CD8-positive, alpha-beta T cell (primary cell): ENCODE measurements at regions of chr4 and their contacts with region 1.

Region 1: GRCh38 chr4:139177868-139178611 is 1.0 kb upstream of the ELF2 start:
- DNase-seq: peak; percentile 73 to 94 (median 88)
- ATAC-seq: peak; percentile 73
- H3K4me3 ChIP-seq: peak overlapping the region; percentile 73 to 99
- H3K4me3 Mint-ChIP-seq: peak overlapping the region; percentile 89
- H3K27ac ChIP-seq: peak overlapping the region; percentile 54 to 67
- H3K27ac Mint-ChIP-seq: peak overlapping the region; percentile 85
- H3K4me1 ChIP-seq: peaks cover 5% of the 10 kb centered on the region
- H3K4me1 Mint-ChIP-seq: peaks cover 19% of the 10 kb centered on the region
- H3K27me3 ChIP-seq: no peaks in the 10 kb centered on the region
- H3K27me3 Mint-ChIP-seq: no peaks in the 10 kb centered on the region
- CTCF ChIP-seq: no peak

Region 2: DNA sequence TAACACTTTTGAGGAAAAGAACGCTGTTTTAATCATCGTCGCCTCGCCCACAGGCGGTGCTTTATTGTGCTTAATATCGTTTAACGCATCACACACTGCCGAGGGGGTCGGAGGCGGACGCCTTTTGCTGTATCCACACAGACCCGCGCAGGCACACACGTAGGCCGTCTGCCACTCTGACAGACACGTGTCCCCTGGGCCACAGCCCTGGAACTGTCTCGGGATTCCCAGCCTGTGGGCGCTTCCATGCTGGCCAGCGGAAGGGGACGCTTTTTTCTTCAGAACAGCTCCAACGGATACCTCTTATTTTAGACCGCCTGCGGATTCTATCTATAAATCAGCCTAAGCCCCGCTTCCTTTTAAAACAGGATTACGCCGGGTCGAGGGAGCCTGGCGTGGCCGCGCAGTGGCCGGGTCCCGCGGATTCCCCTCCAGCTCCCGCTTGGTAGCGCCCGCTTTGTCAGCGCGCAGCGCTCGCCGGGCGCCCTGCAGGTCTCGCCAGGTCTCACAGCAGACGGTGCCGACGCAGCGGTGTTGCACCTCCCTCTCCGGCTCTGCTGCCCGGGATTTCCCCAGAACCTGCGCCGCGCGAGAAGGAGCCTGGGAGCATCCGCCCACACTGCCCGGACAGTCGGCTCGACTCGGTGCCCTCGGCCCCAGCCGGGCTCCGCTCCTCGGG is 162.6 kb before region 1 on chr4 and contains the start of gene NOCT:
- CTCF ChIA-PET with region 1: no interaction called
- POLR2A ChIA-PET with region 1: interaction called, 3 read pairs
- intact Hi-C with region 1: loop called (anchors 1 to 5 kb)
- DNase-seq: peak; percentile 76 to 98 (median 90)
- ATAC-seq: peak; percentile 86
- H3K4me3 ChIP-seq: peak within 1 kb of the TSS; percentile 52 to 67
- H3K4me3 Mint-ChIP-seq: peak within 1 kb of the TSS; percentile 91
- H3K27ac ChIP-seq: peak within 1 kb of the TSS; percentile 75 to 92
- H3K27ac Mint-ChIP-seq: peak within 1 kb of the TSS; percentile 99
- H3K4me1 ChIP-seq: peaks cover 7% of the 10 kb centered on the region
- H3K4me1 Mint-ChIP-seq: peaks cover 30% of the 10 kb centered on the region
- H3K27me3 ChIP-seq: no peaks in the 10 kb centered on the region
- H3K27me3 Mint-ChIP-seq: no peaks in the 10 kb centered on the region
- CTCF ChIP-seq: no peak
- total RNA-seq, gene NOCT: 45.7 to 49.6 TPM

Region 3: DNA sequence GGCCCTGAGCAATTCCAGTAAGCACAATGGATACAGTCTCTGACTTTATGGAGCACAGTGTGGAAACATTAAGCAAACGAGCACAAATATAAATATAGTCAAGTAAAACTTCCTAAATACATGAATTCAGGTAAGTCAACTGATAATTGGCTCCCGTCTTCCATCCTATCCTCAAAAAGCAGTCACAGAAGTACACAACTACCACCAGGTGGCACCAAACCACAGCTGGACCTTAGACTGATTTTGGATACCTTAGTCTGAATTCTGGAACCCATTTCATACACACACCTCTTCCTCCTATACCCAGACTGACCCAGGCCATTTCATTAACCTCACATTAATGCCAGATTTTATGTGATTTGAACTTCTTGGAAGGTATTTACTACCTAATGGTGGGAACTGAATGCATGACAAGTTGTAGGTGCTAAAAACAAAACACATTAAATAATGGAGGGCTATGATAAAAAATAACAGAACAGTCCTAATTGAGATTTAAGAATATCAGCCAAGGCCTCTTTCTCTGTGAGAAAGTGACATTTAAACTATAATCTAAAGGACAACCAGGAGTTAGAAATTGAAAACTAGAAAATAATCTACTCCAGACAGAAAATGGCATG is 78.6 kb before region 1 on chr4:
- CTCF ChIA-PET with region 1: no interaction called
- POLR2A ChIA-PET with region 1: no interaction called
- intact Hi-C with region 1: loop called in 1 of 2 experiments (anchors 5 kb)
- DNase-seq: peak; percentile 37 to 89 (median 75)
- ATAC-seq: peak; percentile 80
- H3K4me3 ChIP-seq: no peak overlapping the region
- H3K4me3 Mint-ChIP-seq: no peak overlapping the region
- H3K27ac ChIP-seq: no peak overlapping the region
- H3K27ac Mint-ChIP-seq: no peak overlapping the region
- H3K4me1 ChIP-seq: no peaks in the 10 kb centered on the region
- H3K4me1 Mint-ChIP-seq: peaks cover 2% of the 10 kb centered on the region
- H3K27me3 ChIP-seq: no peaks in the 10 kb centered on the region
- H3K27me3 Mint-ChIP-seq: no peaks in the 10 kb centered on the region
- CTCF ChIP-seq: peak; percentile 76

Region 4: DNA sequence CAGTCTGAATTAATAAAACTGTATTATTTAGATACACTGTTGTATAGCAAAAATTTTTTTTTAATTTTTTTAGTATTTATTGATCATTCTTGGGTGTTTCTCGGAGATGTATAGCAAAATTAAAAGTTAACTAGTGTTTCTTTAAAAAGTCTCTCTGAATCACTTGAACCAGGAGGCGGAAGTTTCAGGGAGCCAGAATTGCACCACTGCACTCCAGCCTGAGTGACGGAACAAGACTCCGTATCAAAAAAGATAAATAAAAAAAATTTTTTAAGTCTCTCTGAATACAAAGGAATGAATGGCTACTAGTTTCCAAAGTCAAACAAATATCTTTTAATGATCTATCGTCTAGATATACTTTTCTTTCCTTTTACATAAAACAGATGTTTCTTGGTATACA is 65.4 kb before region 1 on chr4:
- CTCF ChIA-PET with region 1: no interaction called
- POLR2A ChIA-PET with region 1: no interaction called
- intact Hi-C with region 1: no loop called
- DNase-seq: no peak
- ATAC-seq: no peak
- H3K4me3 ChIP-seq: no peak overlapping the region
- H3K4me3 Mint-ChIP-seq: no peak overlapping the region
- H3K27ac ChIP-seq: no peak overlapping the region
- H3K27ac Mint-ChIP-seq: no peak overlapping the region
- H3K4me1 ChIP-seq: no peaks in the 10 kb centered on the region
- H3K4me1 Mint-ChIP-seq: no peaks in the 10 kb centered on the region
- H3K27me3 ChIP-seq: no peaks in the 10 kb centered on the region
- H3K27me3 Mint-ChIP-seq: no peaks in the 10 kb centered on the region
- CTCF ChIP-seq: no peak

Region 5: GRCh38 chr4:139234253-139234652 is 56.2 kb after region 1 on chr4:
- CTCF ChIA-PET with region 1: no interaction called
- POLR2A ChIA-PET with region 1: no interaction called
- intact Hi-C with region 1: no loop called
- DNase-seq: no peak
- ATAC-seq: no peak
- H3K4me3 ChIP-seq: no peak overlapping the region
- H3K4me3 Mint-ChIP-seq: no peak overlapping the region
- H3K27ac ChIP-seq: no peak overlapping the region
- H3K27ac Mint-ChIP-seq: no peak overlapping the region
- H3K4me1 ChIP-seq: no peaks in the 10 kb centered on the region
- H3K4me1 Mint-ChIP-seq: peaks cover 4% of the 10 kb centered on the region
- H3K27me3 ChIP-seq: no peaks in the 10 kb centered on the region
- H3K27me3 Mint-ChIP-seq: no peaks in the 10 kb centered on the region
- CTCF ChIP-seq: no peak

Region 6: DNA sequence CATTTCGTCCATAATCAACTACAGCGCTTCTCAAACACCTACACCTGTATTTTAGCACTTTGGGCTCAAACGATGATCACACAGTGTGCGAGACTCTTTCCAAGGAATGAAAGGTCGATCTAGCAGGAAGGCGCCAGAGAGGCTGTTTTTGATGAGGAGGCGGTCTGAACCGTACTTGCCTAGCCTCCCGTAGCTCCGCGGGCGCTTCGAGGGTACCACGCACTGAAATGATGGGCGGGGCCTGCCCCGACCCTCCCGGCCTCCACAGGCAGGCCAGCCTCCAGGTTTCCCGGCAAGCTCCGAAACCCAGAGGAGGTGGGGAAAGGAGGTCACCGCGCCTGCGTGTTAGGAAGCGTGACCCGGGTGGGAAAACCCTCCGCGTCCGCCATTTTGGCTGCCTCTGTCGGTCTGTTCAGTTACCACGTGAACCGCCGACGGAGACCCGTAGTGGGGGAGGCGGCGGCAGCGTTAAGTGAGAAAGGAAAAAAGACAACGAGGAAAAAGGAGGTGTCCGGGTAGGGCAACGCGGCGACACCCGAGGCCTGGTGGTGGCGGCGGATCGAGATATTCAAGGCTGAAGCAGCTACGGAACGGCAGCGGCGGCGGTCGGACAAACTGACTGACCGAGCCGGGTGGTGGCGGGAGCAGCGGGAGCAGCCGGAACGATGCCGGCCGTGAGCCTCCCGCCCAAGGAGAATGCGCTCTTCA is 123.2 kb after region 1 on chr4 and contains the start of gene NAA15:
- CTCF ChIA-PET with region 1: no interaction called
- POLR2A ChIA-PET with region 1: interaction called, 16 read pairs
- intact Hi-C with region 1: loop called in 1 of 2 experiments (anchors 1 kb)
- DNase-seq: peak; percentile 94 to 99 (median 97)
- ATAC-seq: peak; percentile 89
- H3K4me3 ChIP-seq: peak within 1 kb of the TSS; percentile 90 to 94
- H3K4me3 Mint-ChIP-seq: peak within 1 kb of the TSS; percentile 99
- H3K27ac ChIP-seq: peak within 1 kb of the TSS; percentile 75 to 96
- H3K27ac Mint-ChIP-seq: peak within 1 kb of the TSS; percentile 98
- H3K4me1 ChIP-seq: peaks cover 28% of the 10 kb centered on the region
- H3K4me1 Mint-ChIP-seq: peaks cover 60% of the 10 kb centered on the region
- H3K27me3 ChIP-seq: no peaks in the 10 kb centered on the region
- H3K27me3 Mint-ChIP-seq: no peaks in the 10 kb centered on the region
- CTCF ChIP-seq: no peak
- total RNA-seq, gene NAA15: 55.8 to 59.0 TPM

Region 7: GRCh38 chr4:140373328-140374129 is 1195.5 kb after region 1 on chr4 and contains the start of gene SCOC:
- CTCF ChIA-PET with region 1: no interaction called
- POLR2A ChIA-PET with region 1: no interaction called
- intact Hi-C with region 1: loop called in 1 of 2 experiments (anchors 5 kb)
- DNase-seq: peak; percentile 90 to 98 (median 95)
- ATAC-seq: peak; percentile 94
- H3K4me3 ChIP-seq: peak within 1 kb of the TSS; percentile 85 to 92
- H3K4me3 Mint-ChIP-seq: no peak within 1 kb of the TSS
- H3K27ac ChIP-seq: peak within 1 kb of the TSS; percentile 81 to 85
- H3K27ac Mint-ChIP-seq: peak within 1 kb of the TSS; percentile 76
- H3K4me1 ChIP-seq: peaks cover 20% of the 10 kb centered on the region
- H3K4me1 Mint-ChIP-seq: peaks cover 37% of the 10 kb centered on the region
- H3K27me3 ChIP-seq: no peaks in the 10 kb centered on the region
- H3K27me3 Mint-ChIP-seq: no peaks in the 10 kb centered on the region
- CTCF ChIP-seq: no peak
- total RNA-seq, gene SCOC: 7.1 to 8.3 TPM